ENCODE measurements at regions of chr2 and their contacts with region 1.

Region 1: DNA sequence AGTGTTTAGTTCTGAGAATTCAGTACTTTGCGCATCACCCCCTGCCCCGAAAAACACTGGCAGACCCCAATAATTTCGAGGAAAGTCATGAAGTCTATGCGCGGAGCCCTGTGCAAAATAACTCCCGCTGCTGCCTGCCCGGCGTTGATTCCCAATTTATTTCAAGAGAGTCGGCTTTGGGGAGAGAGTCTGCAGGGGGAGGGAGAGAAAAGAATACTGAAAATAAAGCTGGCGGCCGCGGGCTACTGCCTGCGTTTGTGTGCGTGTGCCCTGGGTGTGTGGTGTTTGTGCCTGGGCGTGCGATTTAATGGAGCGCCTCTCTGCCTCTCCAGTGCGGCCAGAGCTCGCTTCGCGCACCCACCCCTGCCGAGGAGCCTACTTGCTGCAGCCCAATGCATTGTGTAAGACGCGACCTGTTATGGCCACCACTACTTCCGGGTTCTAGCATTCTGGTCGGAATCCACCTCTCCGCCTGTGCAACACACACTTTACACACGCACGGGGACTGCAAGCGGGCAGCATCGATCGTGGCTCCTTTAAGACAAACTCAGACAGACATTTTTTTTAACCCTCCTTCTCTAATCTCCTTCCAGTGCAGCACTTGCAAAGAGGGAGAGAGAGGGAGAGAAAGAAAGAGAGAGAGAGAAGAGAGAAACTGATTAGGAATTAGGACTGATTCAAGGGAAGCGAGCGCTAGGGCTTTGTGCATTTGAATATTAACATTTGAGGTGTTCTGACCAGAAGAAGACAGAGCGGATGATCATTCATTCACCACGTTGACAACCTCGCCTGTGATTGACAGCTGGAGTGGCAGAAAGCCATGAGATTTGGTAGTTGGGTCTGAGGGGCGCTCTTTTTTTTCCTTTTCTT is at the start of gene MEIS1:
- DNase-seq: peak; percentile 41
- ATAC-seq: peak; percentile 89
- H3K4me3 ChIP-seq: peak within 1 kb of the TSS; percentile 71 to 83
- H3K27ac ChIP-seq: peak within 1 kb of the TSS; percentile 62
- H3K4me1 ChIP-seq: peaks cover 6% of the 10 kb centered on the region
- H3K27me3 ChIP-seq: peaks cover 14% of the 10 kb centered on the region
- CTCF ChIP-seq: no peak
- total RNA-seq, gene MEIS1: 2.0 TPM

Region 2: GRCh38 chr2:67463810-67464209 is 1028.9 kb after region 1 on chr2:
- CTCF ChIA-PET with region 1: interaction called, 17 read pairs
- POLR2A ChIA-PET with region 1: no interaction called
- in situ Hi-C with region 1: no loop called
- intact Hi-C with region 1: no loop called
- DNase-seq: no peak
- ATAC-seq: no peak
- H3K4me3 ChIP-seq: no peak overlapping the region
- H3K27ac ChIP-seq: no peak overlapping the region
- H3K4me1 ChIP-seq: no peaks in the 10 kb centered on the region
- H3K27me3 ChIP-seq: no peaks in the 10 kb centered on the region
- CTCF ChIP-seq: no peak

Region 3: DNA sequence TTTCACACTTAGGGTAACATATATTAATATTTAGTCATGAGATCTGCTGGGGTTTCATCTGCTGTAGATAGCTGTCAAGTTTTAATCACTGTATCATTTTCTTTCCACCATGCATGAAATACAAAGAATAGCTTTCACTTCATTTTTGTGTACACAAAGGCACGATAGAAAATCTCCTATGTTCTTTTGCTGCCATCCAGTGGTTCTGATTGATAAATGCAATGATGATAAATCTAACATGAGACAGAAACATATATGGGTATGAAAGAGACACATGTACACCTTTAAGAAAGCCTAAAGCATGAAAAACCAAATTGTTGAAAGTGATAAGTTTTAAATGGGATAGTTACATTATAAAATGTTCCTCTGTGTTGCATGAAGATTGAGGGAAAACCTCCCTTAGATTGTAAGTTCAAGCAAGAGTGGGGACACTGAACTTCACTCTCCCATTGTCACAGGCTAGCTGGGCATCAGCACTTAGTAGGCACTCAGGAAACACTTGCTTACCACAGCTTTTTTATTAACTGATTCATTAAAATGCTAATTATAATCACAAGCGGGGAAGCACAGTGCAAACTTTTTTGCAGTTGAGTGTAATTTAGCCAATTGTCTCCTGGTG is 1596.7 kb after region 1 on chr2:
- CTCF ChIA-PET with region 1: no interaction called
- POLR2A ChIA-PET with region 1: no interaction called
- in situ Hi-C with region 1: no loop called
- intact Hi-C with region 1: loop called (anchors 5 kb)
- DNase-seq: peak; percentile 25
- ATAC-seq: peak; percentile 66; the same call in 1 of the 2 replicates
- H3K4me3 ChIP-seq: no peak overlapping the region
- H3K27ac ChIP-seq: no peak overlapping the region
- H3K4me1 ChIP-seq: no peaks in the 10 kb centered on the region
- H3K27me3 ChIP-seq: no peaks in the 10 kb centered on the region; the same call in 1 of the 2 replicates
- CTCF ChIP-seq: peak; percentile 69; the same call in 1 of the 2 replicates